HCT116 (cell line): ENCODE measurements at regions of chr1 and their contacts with region 1.

Region 1: DNA sequence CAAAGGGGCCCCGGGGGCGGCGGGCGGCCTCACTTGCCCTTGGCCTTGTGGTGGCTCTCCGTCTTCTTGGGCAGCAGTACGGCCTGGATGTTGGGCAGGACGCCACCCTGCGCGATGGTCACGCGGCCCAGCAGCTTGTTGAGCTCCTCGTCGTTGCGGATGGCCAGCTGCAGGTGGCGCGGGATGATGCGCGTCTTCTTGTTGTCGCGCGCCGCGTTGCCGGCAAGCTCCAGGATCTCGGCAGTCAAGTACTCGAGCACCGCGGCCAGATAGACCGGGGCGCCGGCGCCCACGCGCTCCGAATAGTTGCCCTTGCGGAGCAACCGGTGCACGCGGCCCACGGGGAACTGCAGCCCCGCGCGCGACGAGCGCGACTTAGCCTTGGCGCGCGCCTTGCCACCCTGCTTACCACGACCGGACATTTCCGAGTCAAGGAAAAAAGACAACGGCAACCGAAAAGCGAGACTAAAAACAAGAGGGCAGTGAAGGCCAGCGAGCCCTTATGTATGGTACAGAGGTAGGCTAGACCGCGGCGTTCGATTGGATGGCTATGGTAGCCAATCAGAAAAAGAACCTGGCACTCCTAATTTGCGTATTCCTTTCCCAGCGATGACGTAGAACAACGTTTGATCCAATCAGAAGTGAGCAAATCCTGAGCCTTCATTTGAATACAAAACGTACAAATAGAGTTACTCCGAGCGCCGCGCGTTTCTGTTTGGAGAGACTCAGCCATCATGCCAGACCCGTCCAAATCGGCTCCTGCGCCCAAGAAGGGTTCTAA is 29.6 kb upstream of the RNF187 start:
- DNase-seq: peak; percentile 99
- ATAC-seq: peak; percentile 82
- H3K4me3 ChIP-seq: peak overlapping the region; percentile 90 to 94
- H3K27ac ChIP-seq: peak overlapping the region; percentile 98
- H3K4me1 ChIP-seq: peaks cover 7 to 33% of the 10 kb centered on the region in 2 experiments; a peak in 3 of 4 replicates
- H3K27me3 ChIP-seq: no peaks in the 10 kb centered on the region
- CTCF ChIP-seq: peak in 2 of 3 experiments; percentile 15 to 24; a peak in 2 of 6 replicates
- POLR2A ChIP-seq: peak; percentile 98
- RAD21 ChIP-seq: peak; percentile 38; the same call in 1 of the 2 replicates

Region 2: DNA sequence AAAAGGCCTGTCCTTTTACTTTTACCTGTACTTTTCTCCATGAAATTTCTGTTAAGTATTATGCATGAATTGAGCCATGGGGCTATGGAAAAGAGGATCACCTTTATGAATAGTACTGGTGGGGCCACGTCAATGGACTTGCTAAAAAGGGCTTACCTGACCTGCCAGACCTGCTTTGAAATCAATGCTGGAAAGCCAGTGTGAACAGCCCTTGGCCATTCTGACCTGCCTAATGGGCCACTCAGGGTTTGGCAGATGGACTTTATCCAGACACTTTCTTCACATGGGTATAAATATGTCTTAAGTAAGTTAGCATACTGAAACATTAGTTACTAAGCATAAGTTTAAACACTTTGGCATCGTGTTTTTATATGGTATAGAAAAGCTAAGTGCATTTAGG is 325.8 kb before region 1 on chr1:
- CTCF ChIA-PET with region 1: interaction called, 3 read pairs
- POLR2A ChIA-PET with region 1: interaction called, 3 read pairs
- RAD21 ChIA-PET with region 1: no interaction called
- intact Hi-C with region 1: loop called (anchors 5 kb)
- DNase-seq: no peak
- ATAC-seq: no peak
- H3K4me3 ChIP-seq: no peak overlapping the region
- H3K27ac ChIP-seq: 0 out of 2 replicates have a peak overlapping the region, but pooled peaks have one; percentile 6
- H3K4me1 ChIP-seq: peaks cover 7 to 18% of the 10 kb centered on the region in 2 experiments
- H3K27me3 ChIP-seq: peaks cover 3% of the 10 kb centered on the region; the same call in 1 of the 2 replicates
- CTCF ChIP-seq: no peak
- POLR2A ChIP-seq: no peak
- RAD21 ChIP-seq: no peak

Region 3: DNA sequence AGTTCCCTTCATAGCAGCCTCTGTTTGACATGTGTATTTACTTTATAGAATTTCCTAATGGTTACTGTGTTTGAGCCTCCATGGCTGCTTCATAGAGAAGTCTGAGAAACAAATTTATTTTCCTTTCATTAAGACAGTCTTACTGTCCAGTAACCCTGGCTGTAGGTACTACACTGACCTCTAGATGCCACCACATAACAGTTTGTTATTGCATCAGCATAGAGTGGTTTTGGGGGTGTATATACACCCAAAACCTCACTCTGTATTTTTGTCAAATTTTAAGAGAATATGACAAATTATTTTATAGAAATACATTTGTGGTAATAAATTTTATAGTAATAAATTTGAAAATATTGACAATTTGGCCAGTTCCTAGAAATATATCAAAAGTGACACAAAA is 192.4 kb before region 1 on chr1:
- CTCF ChIA-PET with region 1: no interaction called
- POLR2A ChIA-PET with region 1: no interaction called
- RAD21 ChIA-PET with region 1: no interaction called
- intact Hi-C with region 1: loop called (anchors 5 kb)
- DNase-seq: no peak
- ATAC-seq: peak; percentile 78
- H3K4me3 ChIP-seq: no peak overlapping the region
- H3K27ac ChIP-seq: no peak overlapping the region
- H3K4me1 ChIP-seq: peaks cover 0 to 3% of the 10 kb centered on the region in 2 experiments; a peak in 1 of 4 replicates
- H3K27me3 ChIP-seq: no peaks in the 10 kb centered on the region
- CTCF ChIP-seq: peak; percentile 20 to 35 (median 27); a peak in 3 of 6 replicates
- POLR2A ChIP-seq: no peak
- RAD21 ChIP-seq: peak; percentile 57

Region 4: DNA sequence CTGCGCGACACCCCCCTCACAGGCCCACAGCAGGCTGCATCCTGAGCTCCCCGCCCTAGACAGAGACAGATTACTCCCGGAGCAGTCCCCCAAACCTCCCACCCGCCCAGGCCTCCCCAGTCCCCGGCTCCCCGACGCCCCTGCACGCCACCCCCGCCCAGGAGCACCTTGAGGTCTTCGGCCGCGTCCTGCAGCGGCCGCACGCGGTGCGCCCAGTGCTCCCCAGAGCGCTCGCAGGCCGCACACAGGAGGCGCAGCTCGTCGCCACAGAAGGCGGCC is 51.7 kb before region 1 on chr1:
- CTCF ChIA-PET with region 1: no interaction called
- POLR2A ChIA-PET with region 1: interaction called, 8 read pairs
- RAD21 ChIA-PET with region 1: no interaction called
- intact Hi-C with region 1: loop called (anchors 2 kb)
- DNase-seq: no peak
- ATAC-seq: no peak
- H3K4me3 ChIP-seq: peak overlapping the region; percentile 82 to 98
- H3K27ac ChIP-seq: peak overlapping the region; percentile 90
- H3K4me1 ChIP-seq: peaks cover 9 to 21% of the 10 kb centered on the region in 2 experiments
- H3K27me3 ChIP-seq: no peaks in the 10 kb centered on the region
- CTCF ChIP-seq: no peak
- POLR2A ChIP-seq: no peak
- RAD21 ChIP-seq: no peak

Region 5: DNA sequence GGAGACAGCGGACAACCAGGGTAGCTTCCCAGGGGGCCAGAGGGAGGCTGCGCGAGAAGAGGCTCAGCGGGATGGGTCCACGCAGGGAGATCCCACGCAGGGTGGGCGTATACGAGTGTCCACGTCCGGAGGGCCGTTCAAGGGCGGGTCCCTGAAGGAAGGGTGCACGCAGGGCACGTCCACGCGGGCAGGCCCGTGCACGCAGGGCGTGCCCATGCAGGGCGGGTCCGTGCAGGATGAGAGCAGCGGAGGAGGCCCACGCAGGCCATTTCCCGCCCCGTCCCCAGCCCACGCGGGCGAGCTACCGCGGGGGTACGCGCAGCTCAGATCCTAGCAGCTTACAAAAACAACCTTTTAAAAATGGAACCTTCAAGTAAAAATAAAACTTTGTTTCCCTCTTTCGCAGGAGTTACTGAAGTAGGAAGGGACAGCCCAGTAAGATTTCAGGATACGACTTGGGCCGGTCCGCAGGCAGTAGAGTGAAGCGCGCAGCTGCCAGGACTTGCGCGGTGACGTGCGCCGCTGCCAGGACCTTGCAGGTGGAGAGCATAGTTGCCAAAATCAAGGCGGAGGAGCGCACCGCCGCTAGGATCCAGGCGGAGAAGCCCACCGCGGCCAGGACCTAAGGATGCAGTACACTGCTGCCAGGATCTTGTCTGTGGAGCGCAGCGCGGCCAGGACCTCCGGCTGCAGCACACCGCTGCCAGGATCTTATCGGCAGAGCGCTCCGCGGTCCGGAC is 29.2 kb after region 1 on chr1:
- CTCF ChIA-PET with region 1: interaction called, 5 read pairs
- POLR2A ChIA-PET with region 1: interaction called, 25 read pairs
- RAD21 ChIA-PET with region 1: no interaction called
- intact Hi-C with region 1: loop called (anchors 1 kb)
- DNase-seq: peak; percentile 88
- ATAC-seq: peak; percentile 76
- H3K4me3 ChIP-seq: peak overlapping the region; percentile 97 to 100
- H3K27ac ChIP-seq: peak overlapping the region; percentile 95
- H3K4me1 ChIP-seq: peaks cover 12 to 26% of the 10 kb centered on the region in 2 experiments; a peak in 3 of 4 replicates
- H3K27me3 ChIP-seq: no peaks in the 10 kb centered on the region
- CTCF ChIP-seq: no peak
- POLR2A ChIP-seq: no peak
- RAD21 ChIP-seq: no peak